Natural killer cell (primary cell): ENCODE measurements at regions of chr5 and their contacts with region 1.

Region 1: GRCh38 chr5:60677844-60678664 is 21.9 kb downstream of the DEPDC1B start:
- DNase-seq: peak in 1 of 2 donors; percentile 53
- ATAC-seq: no peak
- H3K4me3 ChIP-seq: no peak overlapping the region
- H3K4me3 Mint-ChIP-seq: no peak overlapping the region
- H3K27ac ChIP-seq: no peak overlapping the region
- H3K27ac Mint-ChIP-seq: no peak overlapping the region
- H3K4me1 ChIP-seq: no peaks in the 10 kb centered on the region
- H3K4me1 Mint-ChIP-seq: peaks cover 0 to 9% of the 10 kb centered on the region in 2 donors
- H3K27me3 ChIP-seq: no peaks in the 10 kb centered on the region
- H3K27me3 Mint-ChIP-seq: no peaks in the 10 kb centered on the region
- CTCF ChIP-seq: peak; percentile 64

Region 2: GRCh38 chr5:60710373-60710772 is 32.3 kb after region 1 on chr5:
- intact Hi-C with region 1: no loop called
- DNase-seq: no peak
- ATAC-seq: no peak
- H3K4me3 ChIP-seq: no peak overlapping the region
- H3K4me3 Mint-ChIP-seq: no peak overlapping the region
- H3K27ac ChIP-seq: no peak overlapping the region
- H3K27ac Mint-ChIP-seq: no peak overlapping the region
- H3K4me1 ChIP-seq: no peaks in the 10 kb centered on the region
- H3K4me1 Mint-ChIP-seq: no peaks in the 10 kb centered on the region
- H3K27me3 ChIP-seq: no peaks in the 10 kb centered on the region
- H3K27me3 Mint-ChIP-seq: peaks cover 8 to 14% of the 10 kb centered on the region in 2 donors
- CTCF ChIP-seq: no peak

Region 3: DNA sequence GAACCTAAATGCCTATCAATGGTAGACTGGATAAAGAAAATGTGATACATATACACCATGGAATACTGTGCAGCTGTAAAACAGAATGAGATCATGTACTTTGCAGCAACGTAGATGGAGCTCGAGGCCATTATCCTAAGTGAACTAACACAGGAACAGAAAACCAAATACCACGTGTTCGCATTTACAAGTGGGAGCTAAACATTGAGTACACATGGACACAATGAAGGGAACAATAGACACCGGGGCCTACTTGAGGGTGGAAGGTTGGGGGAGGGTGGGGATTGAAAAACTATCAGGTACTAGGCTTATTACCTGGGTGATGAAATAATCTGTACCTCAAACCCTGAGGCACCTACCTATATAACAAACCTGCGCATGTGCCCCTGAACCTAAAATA is 44.4 kb after region 1 on chr5:
- intact Hi-C with region 1: no loop called
- DNase-seq: no peak
- ATAC-seq: no peak
- H3K4me3 ChIP-seq: no peak overlapping the region
- H3K4me3 Mint-ChIP-seq: no peak overlapping the region
- H3K27ac ChIP-seq: no peak overlapping the region
- H3K27ac Mint-ChIP-seq: no peak overlapping the region
- H3K4me1 ChIP-seq: no peaks in the 10 kb centered on the region
- H3K4me1 Mint-ChIP-seq: no peaks in the 10 kb centered on the region
- H3K27me3 ChIP-seq: no peaks in the 10 kb centered on the region
- H3K27me3 Mint-ChIP-seq: peaks cover 17 to 24% of the 10 kb centered on the region in 2 donors
- CTCF ChIP-seq: no peak

Region 4: DNA sequence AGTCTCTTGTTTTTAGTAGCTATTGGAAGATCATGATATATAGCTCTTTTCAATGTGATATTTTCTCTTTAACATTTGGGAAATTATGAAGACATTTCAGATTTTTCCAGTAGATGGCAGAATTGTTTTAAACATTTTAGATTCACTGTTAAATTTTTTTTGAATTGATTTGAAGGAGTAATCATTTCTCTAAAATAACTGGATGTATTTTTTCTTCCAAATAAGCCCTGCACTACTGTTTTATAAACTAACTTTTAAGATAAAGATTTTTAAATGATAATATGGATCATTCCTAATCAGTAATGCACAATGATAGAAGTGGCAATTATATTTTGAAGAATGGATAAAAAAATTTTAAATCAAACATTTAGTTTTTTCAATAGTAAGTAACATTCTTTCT is 281.1 kb after region 1 on chr5:
- intact Hi-C with region 1: loop called (anchors 10 kb)
- DNase-seq: peak in 1 of 2 donors; percentile 33
- ATAC-seq: no peak
- H3K4me3 ChIP-seq: no peak overlapping the region
- H3K4me3 Mint-ChIP-seq: no peak overlapping the region
- H3K27ac ChIP-seq: no peak overlapping the region
- H3K27ac Mint-ChIP-seq: no peak overlapping the region
- H3K4me1 ChIP-seq: no peaks in the 10 kb centered on the region
- H3K4me1 Mint-ChIP-seq: peaks cover 0 to 5% of the 10 kb centered on the region in 2 donors
- H3K27me3 ChIP-seq: no peaks in the 10 kb centered on the region
- H3K27me3 Mint-ChIP-seq: no peaks in the 10 kb centered on the region
- CTCF ChIP-seq: no peak

Region 5: DNA sequence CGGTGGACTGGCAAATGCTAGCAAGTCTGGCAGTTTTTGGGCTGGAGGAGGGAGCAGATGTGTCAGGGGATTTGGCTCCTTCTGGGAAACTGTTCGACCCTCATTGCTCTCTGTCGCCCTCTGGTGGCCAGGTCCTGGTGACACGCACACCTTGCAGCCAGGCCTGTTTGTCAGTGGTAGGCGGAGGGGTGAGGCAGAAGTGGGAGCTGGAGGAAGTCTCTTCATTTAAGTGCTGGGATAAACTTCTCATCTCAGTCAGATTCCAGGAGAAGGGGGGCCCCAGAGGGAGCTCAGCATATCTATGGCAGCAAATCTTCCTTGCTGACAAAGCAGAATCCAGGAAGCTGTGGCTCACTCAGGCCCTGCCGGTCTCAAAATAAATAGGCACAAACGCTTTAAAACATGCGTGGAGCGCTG is 980.5 kb after region 1 on chr5:
- intact Hi-C with region 1: loop called (anchors 2 kb)
- DNase-seq: peak; percentile 71 to 86
- ATAC-seq: peak; percentile 77 to 91 (median 77)
- H3K4me3 ChIP-seq: no peak overlapping the region
- H3K4me3 Mint-ChIP-seq: no peak overlapping the region
- H3K27ac ChIP-seq: no peak overlapping the region
- H3K27ac Mint-ChIP-seq: no peak overlapping the region
- H3K4me1 ChIP-seq: no peaks in the 10 kb centered on the region
- H3K4me1 Mint-ChIP-seq: no peaks in the 10 kb centered on the region
- H3K27me3 ChIP-seq: no peaks in the 10 kb centered on the region
- H3K27me3 Mint-ChIP-seq: peaks cover 10 to 15% of the 10 kb centered on the region in 2 donors
- CTCF ChIP-seq: peak; percentile 91